Heart right ventricle (tissue), 16 donors: ENCODE measurements at regions of chr2 and their contacts with region 1.

Region 1: DNA sequence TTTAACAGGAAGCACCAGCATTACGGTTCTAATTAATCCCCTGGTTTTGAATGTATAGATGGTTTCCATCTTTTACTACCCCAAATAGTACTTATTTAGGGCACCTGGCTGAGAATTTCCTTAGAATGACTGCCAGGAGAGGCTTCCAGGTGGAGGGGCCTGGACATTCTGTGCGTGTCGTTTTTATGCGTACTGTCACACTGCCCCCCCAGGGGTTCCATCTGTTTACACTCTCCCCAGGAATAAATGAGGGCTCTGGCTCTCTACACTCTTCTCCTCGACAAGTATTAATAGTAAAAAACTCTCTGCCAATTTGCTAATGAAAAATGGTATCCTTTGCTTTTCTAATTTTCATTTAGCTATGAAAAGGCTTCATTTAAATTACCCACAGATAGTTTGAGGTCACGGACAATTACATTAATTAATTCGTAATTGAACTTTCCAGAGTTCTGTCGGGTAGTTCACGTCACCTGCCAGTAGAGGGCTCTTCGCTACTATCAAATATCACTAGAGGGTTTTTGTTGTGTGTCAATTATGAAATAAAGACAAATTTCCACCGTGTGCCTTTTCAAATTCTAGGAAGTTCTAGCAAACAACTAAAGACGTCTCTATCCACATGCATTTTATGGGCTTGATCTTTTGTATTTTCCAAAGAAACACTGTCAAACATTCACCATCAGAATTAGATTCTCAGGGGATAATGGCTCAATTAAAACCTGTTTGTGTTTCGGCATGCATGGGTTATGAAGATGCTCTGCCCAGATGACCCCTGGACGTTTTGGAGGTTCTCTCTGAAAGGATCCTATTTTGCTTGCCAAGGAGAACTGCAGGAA is 88.8 kb upstream of the ASB18 start:
- DNase-seq: no peak
- ATAC-seq: peak in 3 of 8 donors; percentile 46 to 57 (median 51)
- H3K4me3 ChIP-seq: no peak overlapping the region
- H3K27ac ChIP-seq: no peak overlapping the region
- H3K4me1 ChIP-seq: peaks cover 0 to 7% (median 0%) of the 10 kb centered on the region in 9 donors
- H3K27me3 ChIP-seq: no peaks in the 10 kb centered on the region
- CTCF ChIP-seq: peak; percentile 69 to 92 (median 84)

Region 2: DNA sequence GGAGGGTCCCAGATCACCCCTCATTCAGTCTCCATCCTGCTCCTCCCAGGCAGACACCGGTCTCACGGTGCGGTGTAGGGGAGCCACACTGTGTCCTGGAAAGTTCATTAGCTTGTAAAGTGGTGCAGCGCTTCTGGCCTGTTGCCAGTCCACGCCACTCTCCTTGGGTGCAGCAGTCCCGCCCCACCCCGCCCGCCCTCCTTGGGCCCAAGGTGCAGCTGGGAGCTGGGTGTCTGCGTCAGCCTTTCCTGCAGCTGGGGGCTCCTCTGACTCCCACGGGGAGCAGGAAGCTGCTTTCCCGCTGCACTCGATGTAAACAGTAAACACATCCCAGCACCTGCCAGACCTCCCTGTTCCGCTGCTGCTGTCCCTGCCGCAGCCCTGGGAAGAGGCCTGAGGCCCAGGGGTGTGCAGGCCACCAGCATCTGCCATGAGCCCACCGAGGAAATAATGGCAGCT is 35.0 kb before region 1 on chr2:
- intact Hi-C with region 1: no loop called
- DNase-seq: peak; percentile 20 to 44
- ATAC-seq: peak; percentile 38 to 88 (median 70)
- H3K4me3 ChIP-seq: no peak overlapping the region
- H3K27ac ChIP-seq: peak overlapping the region in 1 of 10 donors; percentile 34
- H3K4me1 ChIP-seq: peaks cover 0 to 7% (median 0%) of the 10 kb centered on the region in 9 donors
- H3K27me3 ChIP-seq: no peaks in the 10 kb centered on the region
- CTCF ChIP-seq: no peak

Region 3: GRCh38 chr2:237026981-237027711 is 674.2 kb after region 1 on chr2:
- intact Hi-C with region 1: loop called in 9 of 10 experiments (anchors 1 to 10 kb)
- DNase-seq: peak; percentile 71 to 72
- ATAC-seq: peak; percentile 83 to 92 (median 89)
- H3K4me3 ChIP-seq: no peak overlapping the region
- H3K27ac ChIP-seq: peak overlapping the region in 1 of 10 donors; percentile 31
- H3K4me1 ChIP-seq: peaks cover 0 to 5% (median 0%) of the 10 kb centered on the region in 9 donors
- H3K27me3 ChIP-seq: no peaks in the 10 kb centered on the region
- CTCF ChIP-seq: peak; percentile 63 to 94 (median 86)